HepG2 (cell line): ENCODE measurements at regions of chr9 and their contacts with region 1.

Region 1: DNA sequence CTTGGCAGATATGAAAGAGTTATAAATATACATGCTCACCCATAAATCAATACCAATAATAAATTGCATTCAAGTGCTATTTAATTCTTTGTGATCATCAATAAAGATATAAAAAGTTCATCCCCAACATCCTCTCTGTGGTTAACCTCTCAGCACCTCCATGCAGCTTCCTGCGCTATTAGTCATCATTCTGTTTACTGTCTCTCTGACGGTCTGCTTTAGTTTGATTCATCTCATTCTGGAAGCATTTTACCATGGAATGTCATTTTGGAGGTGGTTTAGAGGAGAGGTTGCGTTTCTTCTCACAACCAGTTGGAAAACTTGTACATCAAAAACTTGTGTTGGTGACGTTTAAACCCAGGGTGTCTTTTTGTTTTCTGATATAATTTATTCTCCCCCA is 486.6 kb downstream of the BRINP1 start:
- DNase-seq: no peak
- ATAC-seq: no peak
- H3K4me3 ChIP-seq: no peak overlapping the region
- H3K27ac ChIP-seq: no peak overlapping the region
- H3K4me1 ChIP-seq: no peaks in the 10 kb centered on the region
- H3K27me3 ChIP-seq: no peaks in the 10 kb centered on the region
- CTCF ChIP-seq: no peak
- EP300 ChIP-seq: no peak
- POLR2A ChIP-seq: no peak
- RAD21 ChIP-seq: no peak

Region 2: GRCh38 chr9:118326326-118326725 is 556.4 kb before region 1 on chr9:
- CTCF ChIA-PET with region 1: no interaction called
- POLR2A ChIA-PET with region 1: no interaction called
- in situ Hi-C with region 1: no loop called
- intact Hi-C with region 1: loop called (anchors 5 kb)
- DNase-seq: no peak
- ATAC-seq: no peak
- H3K4me3 ChIP-seq: no peak overlapping the region
- H3K27ac ChIP-seq: no peak overlapping the region
- H3K4me1 ChIP-seq: no peaks in the 10 kb centered on the region
- H3K27me3 ChIP-seq: no peaks in the 10 kb centered on the region
- CTCF ChIP-seq: no peak
- EP300 ChIP-seq: no peak
- POLR2A ChIP-seq: no peak
- RAD21 ChIP-seq: no peak

Region 3: GRCh38 chr9:118896324-118897000 is 13.8 kb after region 1 on chr9:
- CTCF ChIA-PET with region 1: no interaction called
- POLR2A ChIA-PET with region 1: no interaction called
- in situ Hi-C with region 1: no loop called
- intact Hi-C with region 1: no loop called
- DNase-seq: no peak
- ATAC-seq: no peak
- H3K4me3 ChIP-seq: no peak overlapping the region
- H3K27ac ChIP-seq: no peak overlapping the region
- H3K4me1 ChIP-seq: no peaks in the 10 kb centered on the region
- H3K27me3 ChIP-seq: no peaks in the 10 kb centered on the region
- CTCF ChIP-seq: no peak
- EP300 ChIP-seq: no peak
- POLR2A ChIP-seq: no peak
- RAD21 ChIP-seq: no peak